GM23248 (cell line): ENCODE measurements at regions of chr2 and their contacts with region 1.

Region 1: GRCh38 chr2:173210270-173211196 is 134.9 kb downstream of the MAP3K20 start:
- DNase-seq: peak; percentile 98
- H3K4me3 ChIP-seq: no peak overlapping the region
- H3K27ac ChIP-seq: peak overlapping the region; percentile 73
- H3K4me1 ChIP-seq: peaks cover 10% of the 10 kb centered on the region
- H3K27me3 ChIP-seq: no peaks in the 10 kb centered on the region

Region 2: GRCh38 chr2:172806493-172806892 is 404.0 kb before region 1 on chr2:
- in situ Hi-C with region 1: loop called (anchors 25 kb)
- DNase-seq: peak; percentile 72
- H3K4me3 ChIP-seq: no peak overlapping the region
- H3K27ac ChIP-seq: no peak overlapping the region
- H3K4me1 ChIP-seq: no peaks in the 10 kb centered on the region
- H3K27me3 ChIP-seq: no peaks in the 10 kb centered on the region

Region 3: GRCh38 chr2:173027181-173028128 is 183.1 kb before region 1 on chr2:
- in situ Hi-C with region 1: loop called (anchors 5 kb)
- DNase-seq: peak; percentile 87
- H3K4me3 ChIP-seq: no peak overlapping the region
- H3K27ac ChIP-seq: no peak overlapping the region
- H3K4me1 ChIP-seq: peaks cover 5% of the 10 kb centered on the region; the same call in 1 of the 2 replicates
- H3K27me3 ChIP-seq: no peaks in the 10 kb centered on the region

Region 4: GRCh38 chr2:173940208-173941020 is 729.9 kb after region 1 on chr2:
- in situ Hi-C with region 1: no loop called
- DNase-seq: no peak
- H3K4me3 ChIP-seq: no peak overlapping the region
- H3K27ac ChIP-seq: peak overlapping the region; percentile 54
- H3K4me1 ChIP-seq: peaks cover 42% of the 10 kb centered on the region
- H3K27me3 ChIP-seq: no peaks in the 10 kb centered on the region